ENCODE measurements at regions of chr1 and their contacts with region 1.

Region 1: GRCh38 chr1:20448671-20449071 is 37.3 kb downstream of the CAMK2N1 start:
- DNase-seq: no peak
- ATAC-seq: no peak
- H3K4me3 ChIP-seq: no peak overlapping the region
- H3K27ac ChIP-seq: no peak overlapping the region
- H3K4me1 ChIP-seq: no peaks in the 10 kb centered on the region
- H3K27me3 ChIP-seq: peaks cover 0 to 32% (median 6%) of the 10 kb centered on the region in 9 donors
- CTCF ChIP-seq: no peak
- POLR2A ChIP-seq: no peak

Region 2: GRCh38 chr1:20421441-20421840 is 27.2 kb before region 1 on chr1:
- intact Hi-C with region 1: loop called in 1 of 10 experiments (anchors 1 kb)
- DNase-seq: no peak
- ATAC-seq: no peak
- H3K4me3 ChIP-seq: no peak overlapping the region
- H3K27ac ChIP-seq: no peak overlapping the region
- H3K4me1 ChIP-seq: no peaks in the 10 kb centered on the region
- H3K27me3 ChIP-seq: peaks cover 0 to 25% (median 0%) of the 10 kb centered on the region in 9 donors
- CTCF ChIP-seq: no peak
- POLR2A ChIP-seq: no peak

Region 3: DNA sequence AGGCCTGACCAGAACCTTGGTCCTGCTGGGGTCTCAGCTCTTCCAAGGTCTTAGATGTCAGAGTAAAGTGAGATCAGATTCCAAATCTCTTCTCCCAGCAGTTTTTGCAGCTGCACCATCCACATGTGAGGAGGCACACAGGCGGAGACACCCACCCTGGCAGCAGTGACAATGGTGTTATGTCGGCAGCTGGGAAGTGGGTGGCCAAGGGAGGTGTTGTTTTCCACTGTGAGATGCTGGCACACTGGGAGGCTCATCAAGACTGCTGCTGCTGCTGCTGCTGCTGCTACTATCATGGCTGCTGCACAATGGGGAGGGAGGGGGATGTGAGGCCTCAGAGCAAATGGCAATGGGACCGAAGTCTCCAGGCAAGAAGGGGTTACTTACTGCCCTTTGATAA is 13.7 kb after region 1 on chr1:
- intact Hi-C with region 1: loop called in 1 of 10 experiments (anchors 1 kb)
- DNase-seq: no peak
- ATAC-seq: no peak
- H3K4me3 ChIP-seq: no peak overlapping the region
- H3K27ac ChIP-seq: no peak overlapping the region
- H3K4me1 ChIP-seq: no peaks in the 10 kb centered on the region
- H3K27me3 ChIP-seq: peaks cover 0 to 27% (median 0%) of the 10 kb centered on the region in 9 donors
- CTCF ChIP-seq: no peak
- POLR2A ChIP-seq: no peak